CD4-positive, alpha-beta T cell (primary cell): ENCODE measurements at regions of chr13 and their contacts with region 1.

Region 1: DNA sequence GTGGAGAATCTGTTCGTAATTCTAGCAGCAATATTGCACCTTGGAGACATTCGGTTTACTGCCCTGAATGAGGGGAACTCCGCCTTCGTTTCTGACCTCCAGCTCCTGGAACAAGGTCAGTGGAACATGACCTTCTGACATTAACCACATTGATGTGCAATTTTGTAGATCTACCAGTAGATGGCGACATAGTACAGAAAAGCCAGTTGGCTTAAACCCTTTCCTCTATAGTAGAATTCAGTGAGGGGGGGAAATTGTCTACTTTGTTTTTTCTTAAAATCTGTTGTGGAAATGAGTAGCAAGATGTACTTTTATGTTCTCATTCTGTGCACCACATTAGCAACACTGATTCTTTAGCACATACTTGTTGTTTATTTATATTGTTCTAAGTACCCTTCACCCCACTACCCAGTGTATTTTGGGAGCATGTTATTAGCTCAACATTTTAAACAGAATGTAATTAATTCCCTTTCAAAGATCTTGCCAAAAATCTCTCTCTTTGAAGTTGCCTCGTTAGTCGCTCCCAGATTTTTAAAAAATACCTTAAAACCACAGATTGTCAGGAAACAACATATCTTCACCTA is 332.2 kb downstream of the MYO16 start:
- DNase-seq: peak in 4 of 14 experiments; percentile 1 to 66 (median 62)
- ATAC-seq: peak; percentile 54
- H3K4me3 ChIP-seq: no peak overlapping the region
- H3K4me3 Mint-ChIP-seq: no peak overlapping the region
- H3K27ac ChIP-seq: no peak overlapping the region
- H3K27ac Mint-ChIP-seq: no peak overlapping the region
- H3K4me1 ChIP-seq: no peaks in the 10 kb centered on the region
- H3K4me1 Mint-ChIP-seq: no peaks in the 10 kb centered on the region
- H3K27me3 ChIP-seq: no peaks in the 10 kb centered on the region
- H3K27me3 Mint-ChIP-seq: peaks cover 2% of the 10 kb centered on the region
- CTCF ChIP-seq: peak; percentile 91

Region 2: DNA sequence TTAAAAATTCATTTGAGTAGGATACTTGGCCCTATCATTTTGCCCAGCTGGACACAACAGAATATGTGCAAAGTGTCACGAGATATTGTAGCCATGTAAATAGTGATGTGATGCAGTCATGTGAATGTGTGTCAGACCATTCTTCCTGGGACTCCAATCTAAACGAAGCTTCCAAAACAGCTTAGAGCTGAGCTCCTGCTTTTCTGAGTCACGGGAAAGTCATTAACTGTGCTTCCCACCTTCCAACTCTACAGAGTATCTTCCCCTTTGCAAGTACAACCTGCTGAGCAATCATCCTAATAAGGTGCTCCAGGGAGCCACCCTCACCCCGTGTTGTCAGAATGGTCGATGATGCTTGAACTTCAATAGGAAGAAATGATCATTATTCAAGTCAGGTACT is 37.5 kb before region 1 on chr13:
- CTCF ChIA-PET with region 1: no interaction called
- POLR2A ChIA-PET with region 1: no interaction called
- intact Hi-C with region 1: no loop called
- DNase-seq: no peak
- ATAC-seq: no peak
- H3K4me3 ChIP-seq: no peak overlapping the region
- H3K4me3 Mint-ChIP-seq: no peak overlapping the region
- H3K27ac ChIP-seq: no peak overlapping the region
- H3K27ac Mint-ChIP-seq: no peak overlapping the region
- H3K4me1 ChIP-seq: no peaks in the 10 kb centered on the region
- H3K4me1 Mint-ChIP-seq: no peaks in the 10 kb centered on the region
- H3K27me3 ChIP-seq: no peaks in the 10 kb centered on the region
- H3K27me3 Mint-ChIP-seq: no peaks in the 10 kb centered on the region
- CTCF ChIP-seq: no peak

Region 3: GRCh38 chr13:109026266-109026665 is 64.6 kb after region 1 on chr13:
- CTCF ChIA-PET with region 1: no interaction called
- POLR2A ChIA-PET with region 1: no interaction called
- intact Hi-C with region 1: no loop called
- DNase-seq: no peak
- ATAC-seq: no peak
- H3K4me3 ChIP-seq: no peak overlapping the region
- H3K4me3 Mint-ChIP-seq: no peak overlapping the region
- H3K27ac ChIP-seq: no peak overlapping the region
- H3K27ac Mint-ChIP-seq: no peak overlapping the region
- H3K4me1 ChIP-seq: no peaks in the 10 kb centered on the region
- H3K4me1 Mint-ChIP-seq: no peaks in the 10 kb centered on the region
- H3K27me3 ChIP-seq: no peaks in the 10 kb centered on the region
- H3K27me3 Mint-ChIP-seq: no peaks in the 10 kb centered on the region
- CTCF ChIP-seq: no peak

Region 4: DNA sequence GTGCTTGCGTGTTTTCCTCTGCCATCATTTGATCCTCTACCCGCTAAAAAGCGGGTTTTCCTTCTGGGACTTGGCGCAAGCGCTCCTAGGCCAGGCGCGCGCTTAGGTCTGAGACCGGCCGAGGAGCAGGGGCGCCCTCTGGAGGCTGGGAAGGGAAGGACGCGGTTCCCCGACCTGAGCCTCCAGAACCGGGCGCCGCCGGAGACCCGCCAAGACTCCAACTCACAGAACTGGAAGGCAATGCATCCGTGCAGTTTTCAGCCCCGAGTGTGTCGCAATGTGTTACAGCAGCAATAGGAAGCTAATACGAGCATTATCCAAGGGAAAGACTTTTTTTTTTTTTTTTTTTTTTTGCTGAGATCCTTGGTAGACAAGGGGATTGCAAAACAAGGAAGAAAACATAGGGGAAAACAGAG is 1154.4 kb after region 1 on chr13:
- CTCF ChIA-PET with region 1: interaction called, 3 read pairs
- POLR2A ChIA-PET with region 1: no interaction called
- intact Hi-C with region 1: loop called (anchors 1 kb)
- DNase-seq: peak in 12 of 14 experiments; percentile 8 to 64 (median 26)
- ATAC-seq: no peak
- H3K4me3 ChIP-seq: no peak overlapping the region
- H3K4me3 Mint-ChIP-seq: no peak overlapping the region
- H3K27ac ChIP-seq: no peak overlapping the region
- H3K27ac Mint-ChIP-seq: no peak overlapping the region
- H3K4me1 ChIP-seq: peaks cover 3% of the 10 kb centered on the region
- H3K4me1 Mint-ChIP-seq: no peaks in the 10 kb centered on the region
- H3K27me3 ChIP-seq: peaks cover 16 to 28% of the 10 kb centered on the region in 2 experiments
- H3K27me3 Mint-ChIP-seq: peaks cover 39% of the 10 kb centered on the region
- CTCF ChIP-seq: peak; percentile 52

Region 5: GRCh38 chr13:110220471-110220870 is 1258.8 kb after region 1 on chr13:
- CTCF ChIA-PET with region 1: no interaction called
- POLR2A ChIA-PET with region 1: no interaction called
- intact Hi-C with region 1: loop called (anchors 5 kb)
- DNase-seq: no peak
- ATAC-seq: no peak
- H3K4me3 ChIP-seq: no peak overlapping the region
- H3K4me3 Mint-ChIP-seq: no peak overlapping the region
- H3K27ac ChIP-seq: no peak overlapping the region
- H3K27ac Mint-ChIP-seq: no peak overlapping the region
- H3K4me1 ChIP-seq: no peaks in the 10 kb centered on the region
- H3K4me1 Mint-ChIP-seq: no peaks in the 10 kb centered on the region
- H3K27me3 ChIP-seq: peaks cover 3 to 6% of the 10 kb centered on the region in 2 experiments
- H3K27me3 Mint-ChIP-seq: peaks cover 37% of the 10 kb centered on the region
- CTCF ChIP-seq: no peak

Region 6: DNA sequence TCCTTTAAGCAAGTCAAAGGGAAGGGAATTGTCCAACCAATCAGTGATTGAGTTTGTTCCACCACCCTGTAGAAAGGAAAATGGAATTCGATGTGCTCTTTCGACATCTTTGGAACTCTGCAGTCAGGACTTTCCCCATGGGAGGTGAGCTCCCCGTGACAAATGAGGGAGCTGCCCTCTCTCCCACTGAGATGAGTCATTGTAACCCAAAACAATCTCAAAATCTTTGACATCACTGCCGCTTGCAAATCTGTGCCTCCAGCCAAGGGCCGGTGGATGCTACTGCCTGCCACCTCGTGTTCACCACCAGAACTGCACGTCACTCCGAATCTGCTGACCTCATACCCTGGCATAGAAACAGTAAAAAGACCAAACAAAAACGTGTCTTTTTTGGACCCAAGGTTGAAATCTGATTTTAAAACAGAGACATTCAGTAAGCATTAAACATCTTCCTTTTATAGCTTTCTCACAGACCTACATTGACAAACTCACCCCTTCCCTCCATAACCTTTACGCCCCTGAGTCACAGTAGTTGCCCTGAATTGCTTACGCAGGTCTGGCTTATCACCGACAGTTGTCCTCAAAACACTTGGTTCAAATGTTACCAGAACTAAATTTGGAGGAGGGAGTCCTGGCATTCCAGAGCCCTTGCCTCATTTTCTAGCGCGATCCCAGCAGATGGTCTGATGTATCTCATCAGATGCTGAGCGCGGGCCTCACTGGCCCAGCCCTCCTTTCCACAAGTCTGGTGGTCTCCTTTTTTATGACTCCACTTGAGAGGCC is 1450.7 kb after region 1 on chr13:
- CTCF ChIA-PET with region 1: no interaction called
- POLR2A ChIA-PET with region 1: no interaction called
- intact Hi-C with region 1: loop called (anchors 1 to 2 kb)
- DNase-seq: peak; percentile 21 to 73 (median 44)
- ATAC-seq: peak; percentile 54
- H3K4me3 ChIP-seq: no peak overlapping the region
- H3K4me3 Mint-ChIP-seq: no peak overlapping the region
- H3K27ac ChIP-seq: no peak overlapping the region
- H3K27ac Mint-ChIP-seq: no peak overlapping the region
- H3K4me1 ChIP-seq: peaks cover 5% of the 10 kb centered on the region
- H3K4me1 Mint-ChIP-seq: no peaks in the 10 kb centered on the region
- H3K27me3 ChIP-seq: peaks cover 18 to 35% of the 10 kb centered on the region in 2 experiments
- H3K27me3 Mint-ChIP-seq: peaks cover 83% of the 10 kb centered on the region
- CTCF ChIP-seq: peak; percentile 80